ENCODE measurements at regions of chr16 and their contacts with region 1.

Region 1: GRCh38 chr16:72467157-72467759 is 295.3 kb upstream of the PMFBP1 start:
- DNase-seq: peak; percentile 69
- ATAC-seq: peak; percentile 75
- H3K4me3 ChIP-seq: no peak overlapping the region
- H3K27ac ChIP-seq: no peak overlapping the region
- H3K4me1 ChIP-seq: peaks cover 40% of the 10 kb centered on the region
- H3K27me3 ChIP-seq: no peaks in the 10 kb centered on the region
- CTCF ChIP-seq: peak; percentile 90
- EP300 ChIP-seq: no peak
- POLR2A ChIP-seq: no peak
- RAD21 ChIP-seq: peak; percentile 89

Region 2: GRCh38 chr16:72124761-72125634 is 342.3 kb before region 1 on chr16:
- CTCF ChIA-PET with region 1: no interaction called
- POLR2A ChIA-PET with region 1: no interaction called
- in situ Hi-C with region 1: loop called (anchors 5 kb)
- intact Hi-C with region 1: loop called (anchors 1 kb)
- DNase-seq: peak; percentile 67
- ATAC-seq: peak; percentile 90
- H3K4me3 ChIP-seq: 0 out of 6 replicates have a peak overlapping the region, but pooled peaks of 1 of the 3 experiments have one; percentile 6
- H3K27ac ChIP-seq: peak overlapping the region; percentile 53
- H3K4me1 ChIP-seq: peaks cover 26% of the 10 kb centered on the region
- H3K27me3 ChIP-seq: no peaks in the 10 kb centered on the region
- CTCF ChIP-seq: peak; percentile 95
- EP300 ChIP-seq: peak in 1 of 2 experiments; percentile 17; a peak in 1 of 4 replicates
- POLR2A ChIP-seq: no peak
- RAD21 ChIP-seq: peak; percentile 81

Region 3: DNA sequence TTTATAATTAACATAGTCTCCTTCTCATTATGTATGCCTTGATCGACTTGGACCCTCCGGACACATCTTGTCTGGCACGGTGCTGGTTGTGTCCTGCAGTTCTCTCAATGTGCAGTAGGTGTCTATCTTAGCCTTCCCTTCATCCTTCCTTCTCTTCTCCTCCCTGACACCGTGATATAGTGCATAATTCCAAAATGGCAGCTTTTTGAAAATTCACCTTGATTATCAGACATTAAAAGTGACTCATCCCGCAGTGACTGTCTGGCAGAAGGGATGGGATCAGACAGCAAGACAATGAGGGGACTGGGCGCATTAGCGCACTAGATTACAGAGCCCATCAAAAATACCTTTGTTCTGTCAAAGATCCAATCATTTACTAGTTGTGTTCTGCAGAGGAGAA is 225.3 kb before region 1 on chr16:
- CTCF ChIA-PET with region 1: interaction called, 42 read pairs
- POLR2A ChIA-PET with region 1: no interaction called
- in situ Hi-C with region 1: loop called (anchors 5 kb)
- intact Hi-C with region 1: loop called (anchors 1 kb)
- DNase-seq: peak; percentile 52
- ATAC-seq: peak; percentile 97
- H3K4me3 ChIP-seq: no peak overlapping the region
- H3K27ac ChIP-seq: no peak overlapping the region
- H3K4me1 ChIP-seq: no peaks in the 10 kb centered on the region
- H3K27me3 ChIP-seq: no peaks in the 10 kb centered on the region
- CTCF ChIP-seq: peak; percentile 85
- EP300 ChIP-seq: no peak
- POLR2A ChIP-seq: no peak
- RAD21 ChIP-seq: peak; percentile 86

Region 4: GRCh38 chr16:72309001-72309400 is 158.3 kb before region 1 on chr16:
- CTCF ChIA-PET with region 1: no interaction called
- POLR2A ChIA-PET with region 1: no interaction called
- in situ Hi-C with region 1: no loop called
- intact Hi-C with region 1: loop called (anchors 1 kb)
- DNase-seq: peak; percentile 96
- ATAC-seq: peak; percentile 99
- H3K4me3 ChIP-seq: peak overlapping the region in 1 of 3 experiments; percentile 19; a peak in 1 of 6 replicates
- H3K27ac ChIP-seq: peak overlapping the region; percentile 80
- H3K4me1 ChIP-seq: peaks cover 40% of the 10 kb centered on the region
- H3K27me3 ChIP-seq: no peaks in the 10 kb centered on the region
- CTCF ChIP-seq: no peak
- EP300 ChIP-seq: peak in 1 of 2 experiments; percentile 79; a peak in 3 of 4 replicates
- POLR2A ChIP-seq: no peak
- RAD21 ChIP-seq: no peak

Region 5: DNA sequence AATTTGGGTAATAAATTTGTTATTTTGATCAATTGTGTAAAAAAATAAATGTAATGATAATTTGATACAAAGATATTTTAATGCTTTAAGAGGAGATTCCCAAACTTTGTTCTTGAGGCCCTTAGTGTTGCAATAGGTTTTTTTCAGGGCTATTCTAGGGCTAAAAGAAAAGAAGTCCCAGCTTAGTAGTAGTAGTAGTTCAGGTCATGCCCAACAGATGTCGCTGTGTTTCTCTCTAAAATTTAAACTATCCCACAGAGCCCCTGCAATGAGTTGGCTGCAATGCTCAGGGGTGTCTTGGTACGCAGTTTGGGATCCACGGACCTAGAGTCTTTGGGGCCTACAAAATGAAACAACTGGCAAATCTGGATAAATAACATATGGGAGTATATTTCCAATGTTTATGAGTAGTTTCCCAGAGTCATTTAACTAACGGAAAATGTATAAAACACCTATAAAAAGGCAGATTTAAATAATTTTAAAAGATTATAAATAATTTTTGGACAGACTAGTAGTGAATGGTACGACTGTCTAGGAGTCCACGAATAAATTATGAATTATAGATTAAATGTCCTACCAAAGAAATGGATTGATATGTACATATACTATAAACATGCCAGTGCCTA is 66.9 kb before region 1 on chr16:
- CTCF ChIA-PET with region 1: interaction called, 60 read pairs
- POLR2A ChIA-PET with region 1: no interaction called
- in situ Hi-C with region 1: loop called (anchors 10 kb)
- intact Hi-C with region 1: loop called (anchors 1 kb)
- DNase-seq: peak; percentile 71
- ATAC-seq: peak; percentile 82
- H3K4me3 ChIP-seq: no peak overlapping the region
- H3K27ac ChIP-seq: no peak overlapping the region
- H3K4me1 ChIP-seq: no peaks in the 10 kb centered on the region
- H3K27me3 ChIP-seq: no peaks in the 10 kb centered on the region
- CTCF ChIP-seq: peak; percentile 83
- EP300 ChIP-seq: no peak
- POLR2A ChIP-seq: no peak
- RAD21 ChIP-seq: peak; percentile 73

Measured in HepG2 (cell line).